Ovary (tissue), 10 donors: ENCODE measurements at regions of chr14 and their contacts with region 1.

Region 1: DNA sequence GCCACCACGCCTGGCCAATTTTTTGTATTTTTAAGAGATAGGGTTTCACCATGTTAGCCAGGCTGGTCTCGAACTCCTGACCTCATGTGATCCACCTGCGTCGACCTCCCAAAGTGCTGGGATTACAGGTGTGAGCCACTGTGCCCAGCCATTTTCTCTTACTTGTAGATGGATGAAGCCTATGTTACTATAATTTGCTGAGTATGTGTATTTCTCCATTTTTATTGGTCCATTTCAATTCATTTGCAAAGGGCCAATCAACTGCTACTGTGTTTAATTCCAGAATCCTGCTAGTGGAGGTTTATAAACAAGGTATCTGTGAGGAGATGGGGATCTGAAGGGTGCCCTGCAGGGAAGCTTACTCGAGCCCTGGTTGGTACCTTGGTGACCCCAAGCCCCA is 101.7 kb upstream of the MAX start:
- DNase-seq: no peak
- H3K4me3 ChIP-seq: no peak overlapping the region
- H3K27ac ChIP-seq: no peak overlapping the region
- H3K4me1 ChIP-seq: no peaks in the 10 kb centered on the region
- H3K27me3 ChIP-seq: no peaks in the 10 kb centered on the region
- CTCF ChIP-seq: no peak
- EP300 ChIP-seq: no peak
- POLR2A ChIP-seq: no peak

Region 2: DNA sequence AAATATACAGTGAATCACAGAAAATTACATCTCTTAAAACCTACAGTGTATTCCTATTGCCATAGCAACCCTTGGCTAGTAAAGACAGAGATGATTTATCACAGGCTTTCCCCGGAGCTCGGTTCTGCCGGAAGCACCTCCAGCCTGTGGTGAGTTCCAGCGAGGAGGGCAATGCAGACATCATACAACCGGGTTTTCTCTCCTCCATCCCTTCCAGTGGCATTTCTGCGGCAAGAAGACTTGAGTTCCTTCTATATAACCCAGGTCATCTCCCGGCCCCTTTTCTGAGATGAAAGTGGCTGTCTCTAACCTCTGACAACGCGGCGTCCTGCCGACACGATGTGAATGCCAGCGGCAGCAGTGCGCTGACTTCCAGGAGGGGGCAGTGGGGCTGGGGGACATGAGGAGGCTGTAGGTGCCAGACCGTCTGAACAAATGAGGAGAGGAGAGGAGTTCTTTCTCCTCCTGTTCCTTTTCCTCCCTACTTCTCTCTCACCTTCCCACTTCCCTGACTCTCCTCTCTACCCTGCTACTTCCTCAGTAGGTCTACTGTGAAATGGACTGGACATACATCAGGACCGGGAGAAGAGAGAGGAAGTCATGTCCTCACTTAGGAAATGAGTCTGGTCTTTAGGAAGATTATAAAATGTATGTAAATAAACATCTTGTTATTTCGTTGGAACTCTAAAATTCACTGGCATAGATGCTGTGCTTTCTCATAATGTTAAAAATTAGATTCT is 33.1 kb before region 1 on chr14:
- intact Hi-C with region 1: loop called in 1 of 4 experiments (anchors 2 kb)
- DNase-seq: peak in 3 of 5 donors; percentile 13 to 47 (median 29)
- H3K4me3 ChIP-seq: no peak overlapping the region
- H3K27ac ChIP-seq: no peak overlapping the region
- H3K4me1 ChIP-seq: peaks cover 5% of the 10 kb centered on the region
- H3K27me3 ChIP-seq: no peaks in the 10 kb centered on the region
- CTCF ChIP-seq: no peak
- EP300 ChIP-seq: no peak
- POLR2A ChIP-seq: no peak